ENCODE measurements at regions of chr17 and their contacts with region 1.

Region 1: GRCh38 chr17:43483674-43484372 is at the start of gene DHX8:
- DNase-seq: peak; percentile 96 to 100 (median 99)
- ATAC-seq: peak; percentile 99
- H3K4me3 ChIP-seq: peak within 1 kb of the TSS; percentile 90
- H3K4me3 Mint-ChIP-seq: peak within 1 kb of the TSS; percentile 98 to 100 (median 100)
- H3K27ac ChIP-seq: peak within 1 kb of the TSS; percentile 87
- H3K27ac Mint-ChIP-seq: peak within 1 kb of the TSS; percentile 91 to 100 (median 98)
- H3K4me1 ChIP-seq: peaks cover 21 to 29% of the 10 kb centered on the region in 2 donors
- H3K4me1 Mint-ChIP-seq: peaks cover 19 to 52% (median 36%) of the 10 kb centered on the region in 7 donors
- H3K27me3 ChIP-seq: no peaks in the 10 kb centered on the region
- H3K27me3 Mint-ChIP-seq: no peaks in the 10 kb centered on the region
- total RNA-seq, gene DHX8: 67.7 to 93.4 (median 77.8) TPM

Region 2: DNA sequence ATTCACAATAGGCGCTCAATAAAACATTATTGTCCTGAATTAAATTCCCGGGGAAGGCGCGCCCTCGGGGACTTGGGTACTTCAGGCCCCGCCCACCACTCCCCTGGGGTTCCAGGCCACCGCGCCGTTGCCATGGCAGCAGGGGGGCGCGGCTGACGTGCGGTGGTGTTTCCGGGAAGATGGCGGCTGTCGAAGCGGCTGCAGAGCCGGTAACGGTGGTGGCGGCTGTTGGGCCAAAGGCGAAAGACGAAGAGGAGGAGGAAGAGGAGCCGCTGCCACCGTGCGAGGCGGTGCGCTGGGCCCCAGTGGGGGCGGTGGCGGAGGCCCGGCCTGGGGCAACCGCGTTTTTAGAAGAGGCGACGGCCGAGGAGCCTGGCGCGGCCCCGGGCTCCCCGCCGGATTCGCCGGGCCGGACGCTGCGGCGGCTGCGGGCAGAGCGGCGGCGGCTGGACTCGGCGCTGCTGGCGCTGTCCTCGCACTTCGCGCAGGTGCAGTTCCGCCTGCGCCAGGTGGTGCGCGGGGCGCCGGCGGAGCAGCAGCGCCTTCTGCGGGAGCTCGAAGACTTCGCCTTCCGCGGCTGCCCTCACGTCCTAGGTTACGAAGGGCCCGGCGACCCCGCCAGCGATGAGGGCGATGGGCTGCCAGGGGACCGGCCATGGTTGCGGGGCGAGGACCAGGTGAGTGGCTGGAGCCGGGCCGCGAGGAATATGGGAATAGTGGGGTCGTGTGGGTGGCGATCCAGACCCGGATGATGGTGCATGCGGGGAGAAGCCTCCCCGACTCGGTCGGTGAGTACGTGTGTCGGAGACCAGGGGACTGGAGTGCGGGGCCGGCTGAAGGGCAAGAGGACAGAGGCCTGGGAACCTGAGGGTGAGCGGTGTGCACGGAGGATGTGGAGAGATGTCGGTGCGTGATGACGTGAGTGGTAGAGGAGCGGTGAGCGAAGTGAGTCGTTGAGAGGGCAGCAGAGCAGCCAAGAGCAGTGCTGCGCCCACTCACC is 503.1 kb before region 1 on chr17 and contains the start of gene RUNDC1:
- CTCF ChIA-PET with region 1: no interaction called
- POLR2A ChIA-PET with region 1: no interaction called
- intact Hi-C with region 1: loop called in 1 of 2 experiments (anchors 1 kb)
- DNase-seq: peak; percentile 81 to 93 (median 87)
- ATAC-seq: peak; percentile 93
- H3K4me3 ChIP-seq: peak within 1 kb of the TSS; percentile 81
- H3K4me3 Mint-ChIP-seq: peak within 1 kb of the TSS; percentile 96 to 99 (median 98)
- H3K27ac ChIP-seq: peak within 1 kb of the TSS; percentile 84
- H3K27ac Mint-ChIP-seq: peak within 1 kb of the TSS; percentile 83 to 98 (median 94)
- H3K4me1 ChIP-seq: peaks cover 4 to 16% of the 10 kb centered on the region in 2 donors
- H3K4me1 Mint-ChIP-seq: peaks cover 25 to 42% (median 38%) of the 10 kb centered on the region in 7 donors
- H3K27me3 ChIP-seq: no peaks in the 10 kb centered on the region
- H3K27me3 Mint-ChIP-seq: no peaks in the 10 kb centered on the region
- total RNA-seq, gene RUNDC1: 12.2 to 21.4 (median 19.4) TPM

Region 3: GRCh38 chr17:43211480-43212402 is 272.1 kb before region 1 on chr17 and contains the start of gene TMEM106A:
- CTCF ChIA-PET with region 1: no interaction called
- POLR2A ChIA-PET with region 1: interaction called, 6 read pairs
- intact Hi-C with region 1: loop called (anchors 10 kb)
- DNase-seq: peak; percentile 50 to 72 (median 70)
- ATAC-seq: peak; percentile 93
- H3K4me3 ChIP-seq: peak within 1 kb of the TSS; percentile 89
- H3K4me3 Mint-ChIP-seq: peak within 1 kb of the TSS; percentile 89 to 100 (median 96)
- H3K27ac ChIP-seq: peak within 1 kb of the TSS; percentile 86
- H3K27ac Mint-ChIP-seq: peak within 1 kb of the TSS; percentile 89 to 98 (median 94)
- H3K4me1 ChIP-seq: peaks cover 15 to 17% of the 10 kb centered on the region in 2 donors
- H3K4me1 Mint-ChIP-seq: peaks cover 24 to 55% (median 46%) of the 10 kb centered on the region in 7 donors
- H3K27me3 ChIP-seq: no peaks in the 10 kb centered on the region
- H3K27me3 Mint-ChIP-seq: no peaks in the 10 kb centered on the region
- total RNA-seq, gene TMEM106A: 10.4 to 20.7 (median 13.9) TPM

Region 4: DNA sequence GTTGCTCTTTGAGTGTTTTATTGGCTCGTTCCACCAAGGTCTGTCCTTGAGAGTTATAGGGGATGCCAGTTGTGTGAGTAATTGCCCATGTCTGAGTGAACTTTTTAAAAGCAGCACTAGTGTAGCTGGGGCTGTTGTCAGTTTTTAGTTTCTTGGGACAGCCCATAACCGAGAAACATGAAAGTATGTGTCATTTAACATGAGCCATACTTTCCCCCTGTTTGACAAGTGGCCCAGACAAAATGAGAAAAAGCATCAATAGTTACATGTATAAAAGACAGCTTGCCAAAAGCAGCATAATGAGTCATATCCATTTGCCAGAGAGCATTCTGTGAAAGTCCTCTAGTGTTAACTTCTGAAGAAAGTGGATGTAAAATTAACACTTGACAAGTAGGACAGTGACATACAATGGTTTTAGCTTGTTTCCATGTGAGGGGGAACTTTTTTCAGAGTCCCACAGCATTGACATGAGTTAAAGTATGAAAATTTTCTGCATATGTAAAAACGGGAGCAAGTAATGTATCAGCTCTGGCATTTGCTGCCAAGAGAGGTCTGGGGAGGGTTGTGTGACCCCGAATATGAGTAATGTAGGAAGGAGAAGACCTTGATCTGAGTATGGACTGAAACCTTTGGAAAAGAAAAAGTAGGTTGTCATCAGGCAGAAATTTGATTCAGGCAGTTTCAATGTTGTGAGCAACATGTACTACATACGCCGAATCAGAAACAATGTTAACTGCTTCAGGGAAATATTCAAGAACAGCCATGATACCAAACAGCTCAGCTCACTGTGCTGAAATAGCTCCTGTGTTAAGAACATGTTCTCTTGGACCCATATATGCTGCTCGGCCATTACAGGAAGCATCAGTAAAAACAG is 141.9 kb before region 1 on chr17:
- CTCF ChIA-PET with region 1: no interaction called
- POLR2A ChIA-PET with region 1: no interaction called
- intact Hi-C with region 1: no loop called
- DNase-seq: no peak
- ATAC-seq: no peak
- H3K4me3 ChIP-seq: no peak overlapping the region
- H3K4me3 Mint-ChIP-seq: no peak overlapping the region
- H3K27ac ChIP-seq: no peak overlapping the region
- H3K27ac Mint-ChIP-seq: peak overlapping the region in 1 of 9 donors; percentile 30
- H3K4me1 ChIP-seq: no peaks in the 10 kb centered on the region
- H3K4me1 Mint-ChIP-seq: peaks cover 0 to 19% (median 9%) of the 10 kb centered on the region in 7 donors
- H3K27me3 ChIP-seq: no peaks in the 10 kb centered on the region
- H3K27me3 Mint-ChIP-seq: peaks cover 0 to 3% (median 0%) of the 10 kb centered on the region in 5 donors

Region 5: DNA sequence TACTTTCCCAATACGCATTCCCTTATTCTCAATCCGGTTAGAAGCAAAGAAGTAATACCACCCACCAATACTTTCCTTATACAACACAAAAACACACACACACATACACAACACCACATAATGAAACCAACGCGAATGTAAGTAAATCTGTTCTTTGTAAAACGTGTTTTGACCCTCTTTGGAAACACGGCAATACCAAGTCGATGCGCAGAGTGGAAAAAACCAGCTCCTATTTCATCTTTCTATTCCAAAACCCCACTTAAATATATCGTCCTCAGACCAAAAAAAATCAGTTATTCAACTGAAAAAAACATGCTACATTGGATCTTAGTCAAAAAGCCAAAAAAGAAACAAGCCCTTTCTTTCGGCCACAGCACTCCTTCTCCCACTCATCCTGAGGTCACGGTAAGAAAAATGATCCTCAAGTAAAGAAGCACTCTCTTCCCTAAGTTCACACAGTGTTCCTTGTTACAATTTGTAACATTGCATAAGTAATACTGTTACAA is 116.0 kb before region 1 on chr17:
- CTCF ChIA-PET with region 1: interaction called, 17 read pairs
- POLR2A ChIA-PET with region 1: interaction called, 78 read pairs
- intact Hi-C with region 1: loop called (anchors 1 kb)
- DNase-seq: peak in 4 of 9 donors; percentile 31 to 80 (median 70)
- ATAC-seq: peak; percentile 72
- H3K4me3 ChIP-seq: peak overlapping the region; percentile 75
- H3K4me3 Mint-ChIP-seq: peak overlapping the region; percentile 85 to 99 (median 92)
- H3K27ac ChIP-seq: peak overlapping the region; percentile 93
- H3K27ac Mint-ChIP-seq: peak overlapping the region; percentile 99 to 100 (median 100)
- H3K4me1 ChIP-seq: peaks cover 8 to 19% of the 10 kb centered on the region in 2 donors
- H3K4me1 Mint-ChIP-seq: peaks cover 31 to 65% (median 59%) of the 10 kb centered on the region in 7 donors
- H3K27me3 ChIP-seq: no peaks in the 10 kb centered on the region
- H3K27me3 Mint-ChIP-seq: no peaks in the 10 kb centered on the region

Region 6: GRCh38 chr17:43453331-43453812 is 30.5 kb before region 1 on chr17:
- CTCF ChIA-PET with region 1: no interaction called
- POLR2A ChIA-PET with region 1: no interaction called
- intact Hi-C with region 1: no loop called
- DNase-seq: no peak
- ATAC-seq: no peak
- H3K4me3 ChIP-seq: no peak overlapping the region
- H3K4me3 Mint-ChIP-seq: no peak overlapping the region
- H3K27ac ChIP-seq: no peak overlapping the region
- H3K27ac Mint-ChIP-seq: no peak overlapping the region
- H3K4me1 ChIP-seq: no peaks in the 10 kb centered on the region
- H3K4me1 Mint-ChIP-seq: peaks cover 0 to 6% (median 4%) of the 10 kb centered on the region in 7 donors
- H3K27me3 ChIP-seq: no peaks in the 10 kb centered on the region
- H3K27me3 Mint-ChIP-seq: peaks cover 0 to 28% (median 5%) of the 10 kb centered on the region in 5 donors

Region 7: DNA sequence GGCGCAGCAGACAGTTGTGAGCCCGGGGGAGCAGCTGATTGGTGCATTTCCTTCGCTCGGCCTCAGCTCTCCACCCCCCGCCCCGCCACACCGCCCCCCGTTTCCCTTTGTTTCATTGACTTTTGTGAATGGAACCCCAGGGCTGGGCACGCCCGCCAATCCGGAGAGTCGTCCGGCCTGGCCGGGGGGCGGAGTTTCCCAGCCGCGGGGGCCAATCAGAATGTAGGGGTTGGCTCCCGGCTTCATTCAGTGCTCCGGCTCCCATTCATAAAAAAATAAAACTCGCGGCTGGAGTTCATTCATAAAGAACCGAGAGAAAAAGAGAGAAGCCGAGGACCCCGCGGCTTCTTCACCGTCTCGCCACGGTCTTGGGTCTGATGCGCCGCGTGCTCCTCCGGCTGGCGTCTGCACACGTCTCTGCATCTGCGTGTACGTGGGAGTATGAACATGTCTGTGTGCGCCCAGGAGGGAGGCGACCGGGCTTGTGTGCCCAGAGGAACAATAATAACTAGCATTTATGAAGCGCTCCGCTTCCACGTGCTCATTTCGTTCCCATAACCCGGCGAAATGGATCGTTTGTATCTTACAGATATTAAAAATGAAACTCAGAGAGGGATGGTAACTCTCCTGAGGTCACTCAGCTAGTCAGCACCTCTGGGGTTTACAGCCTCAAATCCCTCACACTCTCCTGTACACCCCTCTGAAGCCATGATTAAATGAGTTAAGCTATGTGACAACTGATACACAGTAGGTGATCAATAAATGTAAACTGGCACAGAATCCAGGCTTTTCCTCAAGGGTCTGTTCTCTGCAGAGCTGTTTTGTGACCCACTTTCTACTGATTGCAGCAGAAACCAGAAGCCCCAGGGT is 62.7 kb after region 1 on chr17 and contains the start of gene ETV4:
- CTCF ChIA-PET with region 1: no interaction called
- POLR2A ChIA-PET with region 1: interaction called, 4 read pairs
- intact Hi-C with region 1: loop called in 1 of 2 experiments (anchors 1 kb)
- DNase-seq: peak; percentile 67 to 94 (median 85)
- ATAC-seq: peak; percentile 93
- H3K4me3 ChIP-seq: peak within 1 kb of the TSS; percentile 62
- H3K4me3 Mint-ChIP-seq: peak within 1 kb of the TSS; percentile 83 to 97 (median 87)
- H3K27ac ChIP-seq: no peak within 1 kb of the TSS
- H3K27ac Mint-ChIP-seq: peak within 1 kb of the TSS in 6 of 9 donors; percentile 40 to 89 (median 71)
- H3K4me1 ChIP-seq: peaks cover 13 to 14% of the 10 kb centered on the region in 2 donors
- H3K4me1 Mint-ChIP-seq: peaks cover 18 to 26% (median 22%) of the 10 kb centered on the region in 7 donors
- H3K27me3 ChIP-seq: peaks cover 10 to 38% of the 10 kb centered on the region in 2 donors
- H3K27me3 Mint-ChIP-seq: peaks cover 47 to 69% (median 50%) of the 10 kb centered on the region in 5 donors
- total RNA-seq, gene ETV4: 0.85 TPM in 1 of 5 experiments, not detected in the others